CD4-positive, alpha-beta T cell (primary cell): ENCODE measurements at regions of chr2 and their contacts with region 1.

Region 1: GRCh38 chr2:230614913-230615332 is 97.7 kb upstream of the CAB39 start:
- DNase-seq: peak in 3 of 14 experiments; percentile 15 to 52 (median 17)
- ATAC-seq: peak; percentile 43
- H3K4me3 ChIP-seq: no peak overlapping the region
- H3K4me3 Mint-ChIP-seq: no peak overlapping the region
- H3K27ac ChIP-seq: no peak overlapping the region
- H3K27ac Mint-ChIP-seq: no peak overlapping the region
- H3K4me1 ChIP-seq: peaks cover 17% of the 10 kb centered on the region
- H3K4me1 Mint-ChIP-seq: peaks cover 12% of the 10 kb centered on the region
- H3K27me3 ChIP-seq: no peaks in the 10 kb centered on the region
- H3K27me3 Mint-ChIP-seq: no peaks in the 10 kb centered on the region
- CTCF ChIP-seq: no peak

Region 2: GRCh38 chr2:230007931-230008707 is 606.8 kb before region 1 on chr2:
- CTCF ChIA-PET with region 1: interaction called, 3 read pairs
- POLR2A ChIA-PET with region 1: no interaction called
- intact Hi-C with region 1: loop called (anchors 1 kb)
- DNase-seq: peak; percentile 67 to 86 (median 78)
- ATAC-seq: peak; percentile 72
- H3K4me3 ChIP-seq: no peak overlapping the region
- H3K4me3 Mint-ChIP-seq: peak overlapping the region; percentile 7
- H3K27ac ChIP-seq: no peak overlapping the region
- H3K27ac Mint-ChIP-seq: no peak overlapping the region
- H3K4me1 ChIP-seq: no peaks in the 10 kb centered on the region
- H3K4me1 Mint-ChIP-seq: no peaks in the 10 kb centered on the region
- H3K27me3 ChIP-seq: no peaks in the 10 kb centered on the region
- H3K27me3 Mint-ChIP-seq: no peaks in the 10 kb centered on the region
- CTCF ChIP-seq: peak; percentile 93

Region 3: GRCh38 chr2:230068016-230068650 is 546.8 kb before region 1 on chr2:
- CTCF ChIA-PET with region 1: no interaction called
- POLR2A ChIA-PET with region 1: no interaction called
- intact Hi-C with region 1: loop called (anchors 5 kb)
- DNase-seq: peak in 13 of 14 experiments; percentile 5 to 63 (median 30)
- ATAC-seq: peak; percentile 45
- H3K4me3 ChIP-seq: peak overlapping the region; percentile 50
- H3K4me3 Mint-ChIP-seq: peak overlapping the region; percentile 94
- H3K27ac ChIP-seq: no peak overlapping the region
- H3K27ac Mint-ChIP-seq: peak overlapping the region; percentile 69
- H3K4me1 ChIP-seq: peaks cover 17% of the 10 kb centered on the region
- H3K4me1 Mint-ChIP-seq: peaks cover 6% of the 10 kb centered on the region
- H3K27me3 ChIP-seq: peaks cover 6 to 7% of the 10 kb centered on the region in 2 experiments
- H3K27me3 Mint-ChIP-seq: peaks cover 8% of the 10 kb centered on the region
- CTCF ChIP-seq: no peak

Region 4: GRCh38 chr2:230160112-230160660 is 454.7 kb before region 1 on chr2:
- CTCF ChIA-PET with region 1: interaction called, 5 read pairs
- POLR2A ChIA-PET with region 1: no interaction called
- intact Hi-C with region 1: loop called in 1 of 2 experiments (anchors 5 kb)
- DNase-seq: peak; percentile 21 to 73 (median 40)
- ATAC-seq: peak; percentile 48
- H3K4me3 ChIP-seq: no peak overlapping the region
- H3K4me3 Mint-ChIP-seq: no peak overlapping the region
- H3K27ac ChIP-seq: no peak overlapping the region
- H3K27ac Mint-ChIP-seq: no peak overlapping the region
- H3K4me1 ChIP-seq: peaks cover 4% of the 10 kb centered on the region
- H3K4me1 Mint-ChIP-seq: no peaks in the 10 kb centered on the region
- H3K27me3 ChIP-seq: no peaks in the 10 kb centered on the region
- H3K27me3 Mint-ChIP-seq: no peaks in the 10 kb centered on the region
- CTCF ChIP-seq: peak; percentile 93

Region 5: GRCh38 chr2:230472621-230473018 is 142.3 kb before region 1 on chr2:
- CTCF ChIA-PET with region 1: no interaction called
- POLR2A ChIA-PET with region 1: interaction called, 3 read pairs
- intact Hi-C with region 1: loop called in 1 of 2 experiments (anchors 10 kb)
- DNase-seq: peak in 6 of 14 experiments; percentile 4 to 58 (median 29)
- ATAC-seq: peak; percentile 30
- H3K4me3 ChIP-seq: no peak overlapping the region
- H3K4me3 Mint-ChIP-seq: no peak overlapping the region
- H3K27ac ChIP-seq: peak overlapping the region; percentile 27 to 61
- H3K27ac Mint-ChIP-seq: peak overlapping the region; percentile 80
- H3K4me1 ChIP-seq: peaks cover 16% of the 10 kb centered on the region
- H3K4me1 Mint-ChIP-seq: peaks cover 47% of the 10 kb centered on the region
- H3K27me3 ChIP-seq: no peaks in the 10 kb centered on the region
- H3K27me3 Mint-ChIP-seq: no peaks in the 10 kb centered on the region
- CTCF ChIP-seq: no peak